ENCODE measurements at regions of chr10 and their contacts with region 1.

Region 1: GRCh38 chr10:80382989-80383388 is 25.4 kb upstream of the PRXL2A start:
- DNase-seq: peak; percentile 73
- H3K4me3 Mint-ChIP-seq: no peak overlapping the region
- H3K27ac Mint-ChIP-seq: no peak overlapping the region
- H3K4me1 Mint-ChIP-seq: peaks cover 16% of the 10 kb centered on the region
- H3K27me3 Mint-ChIP-seq: no peaks in the 10 kb centered on the region

Region 2: GRCh38 chr10:80365510-80365909 is 17.5 kb before region 1 on chr10:
- CTCF ChIA-PET with region 1: interaction called, 14 read pairs
- intact Hi-C with region 1: no loop called
- DNase-seq: no peak
- H3K4me3 Mint-ChIP-seq: no peak overlapping the region
- H3K27ac Mint-ChIP-seq: no peak overlapping the region
- H3K4me1 Mint-ChIP-seq: no peaks in the 10 kb centered on the region
- H3K27me3 Mint-ChIP-seq: no peaks in the 10 kb centered on the region

Region 3: GRCh38 chr10:80437231-80437630 is 54.2 kb after region 1 on chr10:
- CTCF ChIA-PET with region 1: interaction called, 10 read pairs
- intact Hi-C with region 1: no loop called
- DNase-seq: no peak
- H3K4me3 Mint-ChIP-seq: no peak overlapping the region
- H3K27ac Mint-ChIP-seq: no peak overlapping the region
- H3K4me1 Mint-ChIP-seq: no peaks in the 10 kb centered on the region
- H3K27me3 Mint-ChIP-seq: no peaks in the 10 kb centered on the region

Region 4: DNA sequence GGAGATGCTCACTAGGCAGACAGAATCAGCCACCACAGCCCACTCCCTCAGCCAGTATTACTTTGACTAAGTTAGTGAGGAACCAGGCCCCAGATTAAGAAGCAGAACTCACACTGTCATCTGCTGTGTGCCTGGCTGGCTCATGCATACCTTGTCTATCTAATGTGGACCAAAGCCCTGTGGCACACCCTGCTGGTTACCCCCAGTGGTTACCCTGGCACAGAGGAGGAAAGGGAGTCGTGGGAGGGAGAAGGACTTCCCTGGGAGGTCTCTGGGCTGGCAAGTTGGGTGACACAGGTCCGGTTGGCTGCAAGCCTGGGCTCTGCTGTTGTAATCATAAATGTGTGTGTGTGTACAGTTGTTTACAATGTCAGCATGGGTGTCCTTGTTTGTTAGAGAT is 147.3 kb after region 1 on chr10:
- CTCF ChIA-PET with region 1: interaction called, 3 read pairs
- intact Hi-C with region 1: loop called (anchors 1 kb)
- DNase-seq: peak; percentile 84
- H3K4me3 Mint-ChIP-seq: peak overlapping the region; percentile 32
- H3K27ac Mint-ChIP-seq: peak overlapping the region; percentile 72
- H3K4me1 Mint-ChIP-seq: peaks cover 73% of the 10 kb centered on the region
- H3K27me3 Mint-ChIP-seq: no peaks in the 10 kb centered on the region

Region 5: DNA sequence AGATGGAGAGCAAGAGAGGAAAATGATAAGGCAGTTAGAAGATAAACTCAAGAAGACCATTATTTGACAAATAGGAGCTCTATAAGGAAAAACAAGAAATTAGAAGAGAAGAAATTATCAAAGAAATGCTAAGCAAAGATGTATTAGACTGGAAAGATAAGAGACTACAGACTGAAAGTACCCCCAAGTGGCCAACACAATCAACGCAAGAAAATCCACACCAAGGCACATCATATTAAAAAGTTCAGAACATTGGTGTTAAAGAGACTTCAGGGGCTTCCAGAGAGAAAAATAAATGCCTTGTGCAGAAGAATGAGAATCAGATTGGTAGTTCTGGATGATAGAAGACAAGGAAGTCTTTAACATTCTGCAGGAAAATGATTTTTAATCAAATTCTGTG is 200.7 kb after region 1 on chr10:
- CTCF ChIA-PET with region 1: no interaction called
- intact Hi-C with region 1: loop called (anchors 1 kb)
- DNase-seq: no peak
- H3K4me3 Mint-ChIP-seq: no peak overlapping the region
- H3K27ac Mint-ChIP-seq: no peak overlapping the region
- H3K4me1 Mint-ChIP-seq: peaks cover 6% of the 10 kb centered on the region
- H3K27me3 Mint-ChIP-seq: no peaks in the 10 kb centered on the region

Region 6: DNA sequence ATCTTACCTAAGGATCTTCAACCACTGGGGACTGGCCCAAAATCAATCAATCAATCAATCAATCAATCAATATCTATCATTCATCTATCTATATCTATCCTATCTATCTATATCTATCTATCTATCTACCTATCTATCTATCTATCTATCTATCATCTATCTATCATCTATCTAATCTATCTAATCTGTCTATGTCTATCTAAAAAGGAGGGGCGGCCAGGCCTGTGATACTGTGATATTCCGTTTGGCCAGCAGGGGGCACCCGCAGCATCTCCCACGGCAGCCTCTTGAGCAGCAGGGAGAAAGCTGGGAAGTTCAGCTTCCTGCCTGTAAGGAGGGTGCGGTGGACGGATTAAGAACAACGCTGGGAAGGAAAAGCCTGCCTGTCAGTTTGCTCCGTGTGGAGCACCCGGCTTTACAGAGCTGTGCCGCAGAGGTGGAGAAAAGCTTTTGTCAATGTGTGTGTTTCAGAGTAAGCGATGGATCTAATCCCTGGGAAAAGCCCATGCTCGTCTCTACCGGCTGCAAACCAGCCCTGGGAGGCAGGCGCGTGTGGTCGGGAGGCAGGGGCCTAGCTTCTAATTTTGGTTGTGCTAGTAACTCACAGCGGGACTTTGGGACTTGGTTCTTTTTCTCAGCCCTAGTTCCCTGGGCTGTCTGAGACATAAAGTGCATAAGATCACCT is 279.7 kb after region 1 on chr10:
- CTCF ChIA-PET with region 1: interaction called, 4 read pairs
- intact Hi-C with region 1: loop called (anchors 2 kb)
- DNase-seq: peak; percentile 83
- H3K4me3 Mint-ChIP-seq: peak overlapping the region; percentile 52
- H3K27ac Mint-ChIP-seq: no peak overlapping the region
- H3K4me1 Mint-ChIP-seq: peaks cover 4% of the 10 kb centered on the region
- H3K27me3 Mint-ChIP-seq: peaks cover 9% of the 10 kb centered on the region

Region 7: GRCh38 chr10:81018708-81019365 is 635.8 kb after region 1 on chr10:
- CTCF ChIA-PET with region 1: no interaction called
- intact Hi-C with region 1: loop called (anchors 2 kb)
- DNase-seq: peak; percentile 45
- H3K4me3 Mint-ChIP-seq: no peak overlapping the region
- H3K27ac Mint-ChIP-seq: no peak overlapping the region
- H3K4me1 Mint-ChIP-seq: no peaks in the 10 kb centered on the region
- H3K27me3 Mint-ChIP-seq: peaks cover 2% of the 10 kb centered on the region